Vagina (tissue), 2 donors: ENCODE measurements at regions of chr2 and their contacts with region 1.

Region 1: GRCh38 chr2:174341286-174341994 is 6.7 kb downstream of the SP9 start:
- DNase-seq: no peak
- H3K4me3 ChIP-seq: peak overlapping the region in 1 of 2 donors; percentile 24
- H3K27ac ChIP-seq: no peak overlapping the region
- H3K4me1 ChIP-seq: peaks cover 41% of the 10 kb centered on the region
- H3K27me3 ChIP-seq: peaks cover 18% of the 10 kb centered on the region
- CTCF ChIP-seq: peak; percentile 67 to 89 (median 81)
- POLR2A ChIP-seq: no peak

Region 2: DNA sequence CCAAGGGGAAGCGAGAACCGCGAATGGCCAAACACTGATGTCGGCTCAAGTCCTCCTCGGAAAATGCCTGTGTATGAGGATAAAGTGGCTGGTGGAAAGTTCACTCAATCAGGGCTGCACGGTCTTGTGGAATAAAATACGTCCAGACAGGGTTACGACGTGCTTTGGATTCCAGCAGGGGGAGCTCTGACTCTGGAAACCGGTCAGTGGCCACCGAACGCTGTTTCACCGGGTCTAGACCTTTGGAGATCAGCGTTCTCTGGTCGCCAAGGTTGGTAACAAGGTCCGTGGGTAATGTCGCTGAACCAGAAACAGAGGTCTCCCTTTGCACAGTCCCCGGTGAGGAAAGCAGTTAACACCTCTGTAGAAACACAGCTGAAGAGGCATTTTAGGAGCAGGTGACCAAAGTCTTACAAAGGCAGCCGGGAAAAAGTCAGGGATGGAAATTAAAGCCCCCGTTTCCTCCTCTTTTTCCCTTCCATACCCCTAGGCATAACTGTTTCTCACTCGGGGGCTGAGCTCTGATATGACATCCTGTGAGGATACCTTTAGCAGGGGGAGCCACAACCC is 939.0 kb before region 1 on chr2:
- intact Hi-C with region 1: loop called (anchors 2 kb)
- DNase-seq: no peak
- H3K4me3 ChIP-seq: peak overlapping the region; percentile 22 to 37
- H3K27ac ChIP-seq: peak overlapping the region; percentile 36
- H3K4me1 ChIP-seq: peaks cover 17% of the 10 kb centered on the region
- H3K27me3 ChIP-seq: no peaks in the 10 kb centered on the region
- CTCF ChIP-seq: peak; percentile 68 to 88 (median 87)
- POLR2A ChIP-seq: no peak

Region 3: DNA sequence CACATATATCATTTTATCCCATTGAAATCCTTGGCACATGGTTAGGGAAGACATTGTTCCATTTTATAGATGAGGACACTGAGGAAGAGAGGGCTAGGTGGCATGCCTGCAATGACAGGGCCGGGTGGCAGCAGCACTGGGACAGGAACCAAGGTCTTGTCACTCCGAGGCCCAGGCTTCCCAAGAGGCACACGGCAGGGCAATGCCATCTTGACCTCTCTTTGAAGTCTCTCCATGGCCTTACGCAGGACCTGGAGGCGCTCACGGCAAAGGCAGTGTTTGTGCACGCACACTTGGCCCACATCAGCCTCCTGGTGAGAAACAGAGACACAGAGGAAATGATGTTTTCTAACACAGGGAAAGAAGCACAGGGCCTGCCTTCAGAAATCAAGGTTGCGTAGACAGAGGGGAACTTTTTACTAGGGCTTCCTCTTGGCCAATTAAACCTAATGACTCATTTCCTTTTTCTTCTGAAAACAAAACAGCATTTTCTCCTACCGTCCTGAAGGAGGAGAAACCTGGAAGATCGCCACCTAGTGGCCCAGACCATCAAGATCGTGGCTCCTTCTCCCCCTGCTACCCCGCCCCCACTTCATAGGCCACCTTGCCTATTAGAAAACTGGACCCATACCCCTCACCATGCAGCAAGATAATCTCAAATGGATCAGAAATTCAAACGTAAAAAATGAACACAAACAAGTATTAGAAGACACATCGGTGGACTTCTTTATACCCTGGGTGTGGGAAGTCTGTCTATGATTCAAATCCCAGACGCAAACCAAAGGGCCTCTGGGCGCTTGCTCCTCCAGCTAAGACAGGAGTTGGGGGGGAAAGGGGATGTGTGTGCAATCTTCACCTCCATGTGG is 301.7 kb before region 1 on chr2:
- intact Hi-C with region 1: loop called (anchors 10 kb)
- DNase-seq: no peak
- H3K4me3 ChIP-seq: no peak overlapping the region
- H3K27ac ChIP-seq: peak overlapping the region; percentile 83
- H3K4me1 ChIP-seq: peaks cover 24% of the 10 kb centered on the region
- H3K27me3 ChIP-seq: no peaks in the 10 kb centered on the region
- CTCF ChIP-seq: peak; percentile 65 to 94 (median 79)
- POLR2A ChIP-seq: no peak

Region 4: GRCh38 chr2:174330945-174331594 is 10.4 kb before region 1 on chr2:
- intact Hi-C with region 1: loop called (anchors 1 kb)
- DNase-seq: no peak
- H3K4me3 ChIP-seq: no peak overlapping the region
- H3K27ac ChIP-seq: no peak overlapping the region
- H3K4me1 ChIP-seq: peaks cover 52% of the 10 kb centered on the region
- H3K27me3 ChIP-seq: peaks cover 27% of the 10 kb centered on the region
- CTCF ChIP-seq: no peak
- POLR2A ChIP-seq: no peak

Region 5: DNA sequence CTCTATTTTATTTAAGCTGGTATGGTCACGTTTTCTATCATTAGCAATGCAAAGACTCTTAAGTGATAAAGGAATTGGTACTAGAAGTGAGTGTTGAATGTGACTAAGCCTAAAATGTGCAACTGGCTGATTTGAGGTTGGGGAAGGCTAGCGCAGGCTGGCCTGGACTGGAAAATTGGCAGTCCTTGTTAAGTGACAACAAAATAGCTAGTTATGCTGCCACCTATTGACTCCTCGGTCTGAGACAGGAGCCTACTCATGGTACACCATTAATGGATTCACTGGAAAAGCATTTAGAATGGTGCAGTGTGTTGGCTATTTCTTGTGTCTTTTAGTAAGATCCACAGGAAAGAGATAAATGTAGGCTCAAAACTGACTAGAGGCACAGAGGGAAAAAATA is 261.8 kb after region 1 on chr2:
- intact Hi-C with region 1: no loop called
- DNase-seq: no peak
- H3K4me3 ChIP-seq: no peak overlapping the region
- H3K27ac ChIP-seq: no peak overlapping the region
- H3K4me1 ChIP-seq: peaks cover 65% of the 10 kb centered on the region
- H3K27me3 ChIP-seq: no peaks in the 10 kb centered on the region
- CTCF ChIP-seq: peak in 2 of 3 experiments; percentile 21 to 25
- POLR2A ChIP-seq: no peak

Region 6: DNA sequence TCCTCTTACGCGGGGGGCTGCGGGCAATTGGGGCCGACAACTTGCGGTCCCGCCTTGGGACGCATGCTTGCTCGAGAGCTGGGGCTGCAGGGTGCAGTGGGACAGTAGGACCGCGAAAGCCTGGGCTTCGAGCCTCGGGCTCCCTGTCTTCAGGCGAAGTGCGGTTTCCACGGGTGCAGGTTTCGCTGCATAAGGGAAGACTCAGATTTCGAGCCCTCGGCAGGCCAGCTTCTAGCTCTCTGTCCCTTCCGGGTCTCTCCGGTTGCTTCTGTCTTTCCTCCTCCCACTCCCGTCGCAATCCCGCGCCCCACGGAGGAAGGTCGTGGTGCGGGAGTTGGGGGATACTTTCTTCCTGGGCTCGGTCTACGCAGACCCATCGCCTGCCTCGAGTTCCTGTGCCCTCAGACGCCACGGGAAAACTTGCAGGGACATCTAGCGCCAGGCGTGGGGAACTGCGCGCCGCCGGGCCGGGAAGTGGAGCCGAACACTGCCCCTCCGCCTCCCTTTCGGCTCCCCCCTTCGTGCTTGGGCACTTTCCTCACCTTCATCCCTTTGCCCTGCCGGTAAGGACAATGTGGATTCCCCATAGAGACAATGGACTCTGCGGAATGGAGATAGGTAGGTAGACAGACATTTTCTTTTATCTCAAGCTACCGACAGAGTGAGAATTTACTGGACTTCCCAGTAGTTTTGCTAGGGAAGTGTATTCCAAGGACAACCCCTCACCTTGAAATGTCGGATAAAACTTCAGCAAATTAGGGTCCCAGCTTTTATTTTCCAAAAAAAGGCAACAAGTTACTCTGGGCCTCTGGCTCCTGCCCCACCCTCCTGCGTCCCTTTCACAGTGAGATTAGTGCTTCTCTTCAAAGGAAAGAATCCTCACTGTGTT is 1746.9 kb after region 1 on chr2:
- intact Hi-C with region 1: loop called (anchors 10 kb)
- DNase-seq: no peak
- H3K4me3 ChIP-seq: peak overlapping the region; percentile 46 to 48
- H3K27ac ChIP-seq: peak overlapping the region; percentile 91
- H3K4me1 ChIP-seq: peaks cover 48% of the 10 kb centered on the region
- H3K27me3 ChIP-seq: no peaks in the 10 kb centered on the region
- CTCF ChIP-seq: peak; percentile 7 to 58 (median 57)
- POLR2A ChIP-seq: no peak